HepG2 (cell line): ENCODE measurements at regions of chr17 and their contacts with region 1.

Region 1: GRCh38 chr17:81394921-81395599 is at the start of gene BAHCC1:
- DNase-seq: peak; percentile 99
- ATAC-seq: peak; percentile 71
- H3K4me3 ChIP-seq: peak within 1 kb of the TSS; percentile 78 to 87 (median 79)
- H3K27ac ChIP-seq: peak within 1 kb of the TSS; percentile 92
- H3K4me1 ChIP-seq: peaks cover 83% of the 10 kb centered on the region
- H3K27me3 ChIP-seq: peaks cover 1 to 59% of the 10 kb centered on the region in 2 experiments; a peak in 4 of 5 replicates
- CTCF ChIP-seq: peak; percentile 23; the same call in 1 of the 2 replicates
- EP300 ChIP-seq: no peak
- POLR2A ChIP-seq: peak in 1 of 2 experiments; percentile 88; a peak in 2 of 4 replicates
- RAD21 ChIP-seq: peak; percentile 34; the same call in 1 of the 2 replicates
- total RNA-seq, gene BAHCC1: 0.94 and 1.7 TPM in 2 replicates

Region 2: GRCh38 chr17:81294856-81295680 is 100.0 kb before region 1 on chr17 and contains the start of gene SLC38A10:
- CTCF ChIA-PET with region 1: interaction called, 3 read pairs
- POLR2A ChIA-PET with region 1: interaction called, 16 read pairs
- in situ Hi-C with region 1: no loop called
- intact Hi-C with region 1: no loop called
- DNase-seq: peak; percentile 88
- ATAC-seq: peak; percentile 94
- H3K4me3 ChIP-seq: peak within 1 kb of the TSS; percentile 87 to 96 (median 90)
- H3K27ac ChIP-seq: peak within 1 kb of the TSS; percentile 86
- H3K4me1 ChIP-seq: peaks cover 49% of the 10 kb centered on the region
- H3K27me3 ChIP-seq: peaks cover 0 to 8% of the 10 kb centered on the region in 2 experiments; a peak in 2 of 5 replicates
- CTCF ChIP-seq: no peak; the same call in none of the 2 replicates
- EP300 ChIP-seq: no peak
- POLR2A ChIP-seq: peak; percentile 91 to 96
- RAD21 ChIP-seq: peak; percentile 8
- total RNA-seq, gene SLC38A10: 23.0 and 55.8 TPM in 2 replicates

Region 3: GRCh38 chr17:81309070-81309905 is 85.8 kb before region 1 on chr17:
- CTCF ChIA-PET with region 1: interaction called, 5 read pairs
- POLR2A ChIA-PET with region 1: interaction called, 19 read pairs
- in situ Hi-C with region 1: loop called (anchors 5 kb)
- intact Hi-C with region 1: no loop called
- DNase-seq: peak; percentile 91
- ATAC-seq: peak; percentile 78
- H3K4me3 ChIP-seq: peak overlapping the region; percentile 47 to 69 (median 50); a peak in 5 of 6 replicates
- H3K27ac ChIP-seq: peak overlapping the region; percentile 32
- H3K4me1 ChIP-seq: peaks cover 53% of the 10 kb centered on the region
- H3K27me3 ChIP-seq: peaks cover 19 to 53% of the 10 kb centered on the region in 2 experiments
- CTCF ChIP-seq: peak; percentile 68
- EP300 ChIP-seq: no peak
- POLR2A ChIP-seq: no peak
- RAD21 ChIP-seq: peak; percentile 83

Region 4: GRCh38 chr17:81328978-81329919 is 65.8 kb before region 1 on chr17:
- CTCF ChIA-PET with region 1: no interaction called
- POLR2A ChIA-PET with region 1: interaction called, 16 read pairs
- in situ Hi-C with region 1: no loop called
- intact Hi-C with region 1: no loop called
- DNase-seq: peak; percentile 79
- ATAC-seq: peak; percentile 81
- H3K4me3 ChIP-seq: peak overlapping the region; percentile 38 to 72 (median 45); a peak in 5 of 6 replicates
- H3K27ac ChIP-seq: no peak overlapping the region
- H3K4me1 ChIP-seq: peaks cover 77% of the 10 kb centered on the region
- H3K27me3 ChIP-seq: peaks cover 18 to 78% of the 10 kb centered on the region in 2 experiments
- CTCF ChIP-seq: peak; percentile 35
- EP300 ChIP-seq: no peak
- POLR2A ChIP-seq: no peak
- RAD21 ChIP-seq: no peak

Region 5: DNA sequence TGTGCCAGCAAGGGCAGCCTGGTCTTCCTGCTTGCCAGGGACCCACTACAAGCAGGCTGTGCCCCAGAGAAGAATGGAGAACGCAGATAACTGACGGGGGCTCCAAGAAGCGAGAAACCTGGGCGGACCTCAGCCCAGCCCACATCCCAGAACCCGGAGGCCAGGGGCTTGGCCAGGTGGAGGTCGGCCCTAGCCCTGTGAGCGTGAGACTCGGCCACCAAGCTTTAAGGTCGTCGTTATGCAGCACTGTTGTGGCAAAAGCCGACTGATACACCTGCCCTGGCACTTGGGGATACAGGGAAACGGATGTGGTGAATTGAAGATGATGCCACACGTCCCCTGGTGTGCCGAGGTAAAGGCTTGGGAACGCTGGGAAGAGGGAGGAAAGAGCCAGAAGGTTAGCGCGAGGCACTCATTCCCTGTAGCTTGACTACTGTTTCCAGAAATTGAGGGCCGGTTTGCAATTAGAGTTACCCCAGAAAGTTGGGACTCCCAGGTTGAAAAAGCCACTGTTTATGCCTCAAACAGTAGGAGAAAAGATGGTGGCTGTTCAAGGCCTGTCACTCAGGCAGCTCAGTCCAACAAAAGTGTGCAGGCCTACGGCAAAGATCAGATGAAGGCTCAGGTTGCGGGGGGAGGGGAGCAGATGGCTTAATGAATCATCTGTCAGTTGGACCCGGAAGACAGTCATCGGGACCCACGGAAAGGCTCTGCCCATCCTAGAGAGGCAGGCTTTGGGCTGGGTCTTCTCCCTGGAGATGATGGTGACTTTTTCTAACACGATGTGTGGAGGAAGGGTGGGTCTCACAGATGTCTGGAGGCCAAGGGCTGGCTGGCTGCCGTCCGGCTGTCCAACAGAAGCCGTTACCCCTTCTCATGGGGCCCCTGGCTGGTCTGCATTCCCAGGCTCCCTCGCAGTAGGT is 45.4 kb before region 1 on chr17:
- CTCF ChIA-PET with region 1: no interaction called
- POLR2A ChIA-PET with region 1: interaction called, 15 read pairs
- in situ Hi-C with region 1: no loop called
- intact Hi-C with region 1: no loop called
- DNase-seq: peak; percentile 79
- ATAC-seq: no peak
- H3K4me3 ChIP-seq: peak overlapping the region in 2 of 3 experiments; percentile 14 to 51; a peak in 2 of 6 replicates
- H3K27ac ChIP-seq: no peak overlapping the region
- H3K4me1 ChIP-seq: peaks cover 65% of the 10 kb centered on the region
- H3K27me3 ChIP-seq: peaks cover 5 to 58% of the 10 kb centered on the region in 2 experiments; a peak in 3 of 5 replicates
- CTCF ChIP-seq: no peak
- EP300 ChIP-seq: no peak
- POLR2A ChIP-seq: no peak
- RAD21 ChIP-seq: no peak

Region 6: GRCh38 chr17:81453712-81454111 is 58.7 kb after region 1 on chr17:
- CTCF ChIA-PET with region 1: no interaction called
- POLR2A ChIA-PET with region 1: no interaction called
- in situ Hi-C with region 1: no loop called
- intact Hi-C with region 1: no loop called
- DNase-seq: no peak
- ATAC-seq: no peak
- H3K4me3 ChIP-seq: no peak overlapping the region
- H3K27ac ChIP-seq: no peak overlapping the region
- H3K4me1 ChIP-seq: peaks cover 11% of the 10 kb centered on the region
- H3K27me3 ChIP-seq: peaks cover 0 to 2% of the 10 kb centered on the region in 2 experiments; a peak in 1 of 5 replicates
- CTCF ChIP-seq: no peak
- EP300 ChIP-seq: no peak
- POLR2A ChIP-seq: no peak
- RAD21 ChIP-seq: no peak

Region 7: DNA sequence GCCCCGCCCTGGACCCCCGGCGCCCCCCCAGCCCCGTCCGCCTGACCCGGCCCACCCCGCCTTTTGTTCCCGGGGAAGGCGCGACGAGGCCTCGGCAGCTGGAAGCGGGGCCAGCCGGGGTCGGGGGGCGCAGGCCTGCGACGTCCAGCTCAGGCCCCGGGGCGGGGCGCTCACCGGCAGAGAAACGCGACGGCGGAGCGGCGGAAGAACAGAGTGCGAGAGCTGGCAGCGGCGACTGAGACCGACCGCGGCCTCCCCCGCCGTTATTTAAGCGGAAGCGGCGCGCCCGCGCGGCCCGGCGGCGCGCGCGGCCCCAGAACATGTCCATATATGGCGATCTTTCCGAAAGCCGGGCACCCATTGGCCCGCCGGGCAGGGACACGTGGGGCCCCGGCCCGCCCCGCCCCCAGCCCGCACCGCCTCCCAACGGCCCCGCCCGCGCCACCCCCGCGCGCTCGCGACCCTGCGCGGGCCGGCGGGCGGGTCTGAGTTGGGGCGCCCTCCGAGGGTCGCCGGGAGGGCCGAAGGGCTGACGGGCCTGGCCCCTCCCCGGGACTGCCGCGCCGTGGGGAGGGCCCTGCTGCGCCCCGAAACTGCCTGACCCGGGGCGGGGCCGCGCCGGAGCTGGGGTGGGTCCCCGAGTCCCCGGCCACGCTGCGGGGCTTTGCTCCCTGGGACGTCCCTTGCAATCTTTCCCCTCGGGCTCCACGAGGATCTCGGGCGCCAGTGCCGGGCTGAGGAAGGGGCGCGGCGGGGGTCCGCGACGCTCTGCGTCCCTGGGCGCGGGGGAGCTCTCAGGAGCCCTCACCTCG is 117.7 kb after region 1 on chr17 and contains the start of gene ACTG1:
- CTCF ChIA-PET with region 1: no interaction called
- POLR2A ChIA-PET with region 1: interaction called, 6 read pairs
- in situ Hi-C with region 1: no loop called
- intact Hi-C with region 1: loop called (anchors 10 kb)
- DNase-seq: peak; percentile 86
- ATAC-seq: peak; percentile 21
- H3K4me3 ChIP-seq: peak within 1 kb of the TSS; percentile 67 to 90 (median 75)
- H3K27ac ChIP-seq: peak within 1 kb of the TSS; percentile 86
- H3K4me1 ChIP-seq: peaks cover 60% of the 10 kb centered on the region
- H3K27me3 ChIP-seq: no peaks in the 10 kb centered on the region; a peak in 1 of 5 replicates
- CTCF ChIP-seq: no peak
- EP300 ChIP-seq: peak in 1 of 2 experiments; percentile 18; a peak in 1 of 4 replicates
- POLR2A ChIP-seq: peak in 1 of 2 experiments; percentile 99; a peak in 2 of 4 replicates
- RAD21 ChIP-seq: peak; percentile 9; the same call in 1 of the 2 replicates
- total RNA-seq, gene ACTG1: 973 and 1,028 TPM in 2 replicates

Region 8: DNA sequence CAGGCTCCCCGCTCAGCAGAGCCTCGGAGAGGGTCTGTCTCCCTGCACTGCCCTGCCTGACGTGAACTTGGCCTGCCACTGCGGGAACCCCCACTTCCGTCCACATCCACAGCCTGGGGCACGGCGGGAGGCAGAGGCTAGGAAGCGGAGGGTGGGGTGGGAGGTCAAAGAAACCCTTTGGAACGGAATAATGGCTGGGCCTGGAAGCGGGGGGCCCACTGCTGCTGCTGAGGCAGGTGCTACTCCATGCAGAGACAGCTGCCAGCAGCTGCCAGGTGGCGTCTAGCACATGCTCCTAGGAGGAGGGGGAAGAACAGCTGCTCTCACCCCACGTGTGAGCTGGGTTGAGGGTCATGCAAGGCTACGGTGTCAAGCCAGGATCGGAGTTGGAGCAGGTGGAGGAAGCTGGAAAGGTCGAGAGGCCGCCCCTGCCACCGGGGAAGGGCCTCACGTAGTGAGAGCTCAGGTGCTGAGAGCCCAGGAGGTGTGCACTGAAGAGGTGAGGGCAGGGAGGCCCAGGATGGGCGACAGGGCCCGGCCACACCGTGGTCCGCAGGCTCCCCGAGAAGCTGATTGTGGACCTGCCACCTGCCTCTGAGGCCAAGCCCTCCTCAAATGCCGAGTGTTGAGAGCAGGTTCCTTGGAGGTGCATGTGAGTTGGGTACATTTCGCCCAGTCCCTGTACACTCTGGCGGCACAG is 142.9 kb after region 1 on chr17:
- CTCF ChIA-PET with region 1: no interaction called
- POLR2A ChIA-PET with region 1: no interaction called
- in situ Hi-C with region 1: no loop called
- intact Hi-C with region 1: no loop called
- DNase-seq: no peak
- ATAC-seq: no peak
- H3K4me3 ChIP-seq: no peak overlapping the region
- H3K27ac ChIP-seq: no peak overlapping the region
- H3K4me1 ChIP-seq: peaks cover 10% of the 10 kb centered on the region
- H3K27me3 ChIP-seq: no peaks in the 10 kb centered on the region
- CTCF ChIP-seq: no peak
- EP300 ChIP-seq: no peak
- POLR2A ChIP-seq: no peak
- RAD21 ChIP-seq: no peak